ENCODE measurements at regions of chr9 and their contacts with region 1.

Region 1: DNA sequence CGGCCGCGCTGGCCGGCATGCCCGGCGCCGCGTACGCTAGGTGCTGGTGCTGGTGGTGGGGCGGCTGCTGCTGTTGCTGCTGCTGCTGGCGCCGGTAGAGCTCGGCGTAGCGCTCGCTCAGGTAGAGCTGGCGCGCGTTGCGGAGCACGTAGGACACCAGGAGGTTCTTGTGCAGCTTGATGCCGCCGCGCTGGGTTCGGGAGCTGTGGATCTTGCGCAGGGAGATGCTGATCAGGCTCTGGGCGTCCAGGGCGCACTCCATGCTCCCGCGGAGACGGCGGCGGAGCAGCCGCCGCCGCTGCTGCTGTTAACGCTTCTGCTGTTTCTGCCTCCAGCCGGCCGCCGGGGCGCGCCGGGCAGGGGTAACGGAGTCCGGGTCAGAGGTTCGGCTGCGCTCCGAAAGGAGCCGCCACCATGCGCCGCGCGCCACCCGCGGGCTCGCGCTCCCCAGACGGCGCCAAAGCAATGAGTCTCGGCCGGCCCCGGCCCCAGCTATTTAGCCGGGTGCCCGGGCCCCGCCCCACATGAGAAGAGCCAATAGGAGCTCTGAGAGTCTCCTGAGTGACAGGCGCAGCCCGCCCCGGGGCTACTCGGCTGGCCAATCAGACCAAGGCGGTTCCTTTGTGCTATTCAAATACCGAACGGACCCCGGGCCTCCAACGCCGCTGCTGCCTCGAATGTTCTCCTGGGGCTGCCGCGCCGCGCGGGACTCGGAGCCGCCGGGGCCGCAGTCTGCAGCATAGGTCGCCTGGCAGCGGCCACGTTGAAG is at the start of gene IER5L:
- DNase-seq: peak; percentile 94 to 98 (median 97)
- ATAC-seq: peak; percentile 85 to 90 (median 89)
- H3K4me3 ChIP-seq: peak within 1 kb of the TSS; percentile 77 to 99 (median 95)
- H3K27ac ChIP-seq: peak within 1 kb of the TSS; percentile 81 to 100 (median 99)
- H3K4me1 ChIP-seq: peaks cover 3 to 43% (median 25%) of the 10 kb centered on the region in 12 donors
- H3K27me3 ChIP-seq: no peaks in the 10 kb centered on the region
- CTCF ChIP-seq: no peak
- POLR2A ChIP-seq: peak; percentile 90 to 99
- total RNA-seq, gene IER5L: 4.1 to 18.4 (median 5.5) TPM

Region 2: DNA sequence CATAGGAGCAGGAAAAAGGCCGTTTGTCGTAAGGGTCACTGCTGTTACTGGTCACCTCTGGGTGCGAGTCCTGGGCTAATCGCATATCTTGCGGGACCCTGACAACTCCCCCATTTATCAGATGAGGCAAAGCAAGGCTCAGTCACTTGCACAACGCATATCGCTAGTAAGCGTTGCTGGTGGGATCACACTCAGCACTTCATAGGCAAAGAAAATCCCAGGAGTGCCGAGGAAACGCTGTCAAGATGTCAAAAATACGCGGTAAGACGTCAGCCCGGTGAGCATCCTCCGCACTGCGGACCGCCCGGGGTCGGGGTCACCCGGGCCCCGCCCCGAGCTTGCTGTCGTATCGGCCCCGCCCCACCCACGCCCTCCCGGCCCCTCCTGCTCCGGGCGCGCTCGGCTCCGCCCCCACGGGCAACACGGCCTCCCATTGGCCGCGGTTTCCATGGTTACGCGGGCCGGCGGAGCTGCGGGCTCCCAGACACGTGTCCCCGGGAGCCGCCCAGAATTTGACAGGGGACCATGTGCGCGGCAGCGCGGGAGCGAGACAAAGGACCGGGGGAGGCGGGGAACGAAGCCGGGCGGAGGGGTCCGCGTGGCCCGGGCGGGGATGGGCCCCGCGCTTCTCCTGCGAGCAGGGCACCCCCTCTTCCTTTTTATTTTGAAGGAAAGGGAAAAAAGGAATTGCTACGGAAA is 80.3 kb after region 1 on chr9:
- intact Hi-C with region 1: loop called in 6 of 10 experiments (anchors 5 to 10 kb)
- DNase-seq: peak; percentile 93 to 97 (median 95)
- ATAC-seq: peak; percentile 66 to 87 (median 82)
- H3K4me3 ChIP-seq: peak overlapping the region in 9 of 12 donors; percentile 17 to 41 (median 33)
- H3K27ac ChIP-seq: peak overlapping the region in 6 of 12 donors; percentile 4 to 62 (median 20)
- H3K4me1 ChIP-seq: peaks cover 6 to 45% (median 28%) of the 10 kb centered on the region in 12 donors
- H3K27me3 ChIP-seq: peaks cover 0 to 16% (median 0%) of the 10 kb centered on the region in 9 donors
- CTCF ChIP-seq: no peak
- POLR2A ChIP-seq: no peak

Region 3: DNA sequence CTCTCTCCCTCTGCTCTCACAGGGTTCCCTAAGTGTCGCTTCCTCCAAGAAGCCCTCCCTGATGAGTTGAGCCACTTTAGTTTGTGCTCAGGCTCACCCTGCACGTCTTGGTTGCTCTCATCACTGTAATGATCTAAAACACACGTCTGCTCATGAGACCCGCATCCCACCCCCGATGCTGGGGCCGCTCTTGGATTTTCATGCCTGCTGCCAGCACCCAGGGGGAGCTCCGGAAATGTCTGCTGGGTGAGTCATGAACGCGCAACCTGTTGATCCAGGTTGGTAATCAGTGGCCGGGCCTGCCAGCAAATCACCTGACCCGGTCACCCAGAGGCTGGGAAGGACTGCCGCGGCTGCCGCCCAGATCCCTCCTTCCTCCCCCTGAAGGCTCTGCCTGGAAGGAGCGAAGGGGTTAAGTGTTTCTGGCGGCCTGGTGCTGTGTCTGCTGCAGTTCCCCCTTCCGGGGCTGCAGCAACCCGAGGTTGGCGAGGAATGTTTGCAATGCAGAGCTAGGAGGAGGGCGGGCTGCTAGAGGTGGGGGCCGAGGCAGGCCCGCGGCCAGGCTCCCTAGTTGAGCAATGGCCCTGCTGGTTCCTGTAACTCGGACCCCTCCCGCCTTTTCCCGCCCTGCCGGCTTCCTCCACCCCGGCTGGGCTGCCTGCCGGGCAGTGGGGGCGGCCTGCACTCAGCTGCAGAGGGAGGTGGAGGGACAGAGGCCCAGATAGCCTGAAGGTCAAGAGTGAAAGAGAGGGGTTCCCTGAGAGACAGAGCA is 156.2 kb after region 1 on chr9:
- intact Hi-C with region 1: loop called in 1 of 10 experiments (anchors 5 kb)
- DNase-seq: peak; percentile 92 to 95 (median 94)
- ATAC-seq: peak; percentile 85 to 94 (median 89)
- H3K4me3 ChIP-seq: peak overlapping the region in 9 of 12 donors; percentile 16 to 40 (median 25)
- H3K27ac ChIP-seq: peak overlapping the region; percentile 39 to 97 (median 88)
- H3K4me1 ChIP-seq: peaks cover 12 to 65% (median 43%) of the 10 kb centered on the region in 12 donors
- H3K27me3 ChIP-seq: no peaks in the 10 kb centered on the region
- CTCF ChIP-seq: no peak
- POLR2A ChIP-seq: peak in 1 of 2 donors; percentile 46

Region 4: GRCh38 chr9:129383561-129384416 is 205.8 kb after region 1 on chr9:
- intact Hi-C with region 1: loop called in 2 of 10 experiments (anchors 10 kb)
- DNase-seq: peak; percentile 85 to 92 (median 87)
- ATAC-seq: peak; percentile 68 to 92 (median 89)
- H3K4me3 ChIP-seq: peak overlapping the region; percentile 15 to 78 (median 64)
- H3K27ac ChIP-seq: peak overlapping the region; percentile 90 to 98 (median 96)
- H3K4me1 ChIP-seq: peaks cover 0 to 25% (median 15%) of the 10 kb centered on the region in 12 donors
- H3K27me3 ChIP-seq: no peaks in the 10 kb centered on the region
- CTCF ChIP-seq: peak in 5 of 12 donors; percentile 26 to 47 (median 35)
- POLR2A ChIP-seq: peak in 1 of 2 donors; percentile 41

Region 5: GRCh38 chr9:129487642-129488409 is 309.9 kb after region 1 on chr9:
- intact Hi-C with region 1: loop called in 7 of 10 experiments (anchors 2 to 10 kb)
- DNase-seq: peak; percentile 56 to 79 (median 72)
- ATAC-seq: peak in 2 of 4 donors; percentile 2 to 3
- H3K4me3 ChIP-seq: peak overlapping the region; percentile 21 to 68 (median 60)
- H3K27ac ChIP-seq: peak overlapping the region; percentile 93 to 100 (median 99)
- H3K4me1 ChIP-seq: peaks cover 23 to 93% (median 73%) of the 10 kb centered on the region in 12 donors
- H3K27me3 ChIP-seq: no peaks in the 10 kb centered on the region
- CTCF ChIP-seq: no peak
- POLR2A ChIP-seq: no peak

Measured in heart left ventricle (tissue), 16 donors.